GM12878 (cell line): ENCODE measurements at regions of chr11 and their contacts with region 1.

Region 1: GRCh38 chr11:112086422-112087191 is at the starts of genes SDHD and TIMM8B:
- DNase-seq: peak; percentile 93
- ATAC-seq: peak; percentile 95
- H3K4me3 ChIP-seq: peak within 1 kb of the TSS; percentile 98
- H3K27ac ChIP-seq: peak within 1 kb of the TSS; percentile 61
- H3K4me1 ChIP-seq: peaks cover 3% of the 10 kb centered on the region; the same call in 1 of the 2 replicates
- H3K27me3 ChIP-seq: no peaks in the 10 kb centered on the region
- CTCF ChIP-seq: peak; percentile 29 to 41 (median 36); a peak in 4 of 6 replicates
- EP300 ChIP-seq: no peak
- POLR2A ChIP-seq: peak; percentile 97
- RAD21 ChIP-seq: no peak
- polyA plus RNA-seq, gene SDHD: 469 to 775 TPM
- polyA plus RNA-seq, gene TIMM8B: 247 to 271 TPM

Region 2: DNA sequence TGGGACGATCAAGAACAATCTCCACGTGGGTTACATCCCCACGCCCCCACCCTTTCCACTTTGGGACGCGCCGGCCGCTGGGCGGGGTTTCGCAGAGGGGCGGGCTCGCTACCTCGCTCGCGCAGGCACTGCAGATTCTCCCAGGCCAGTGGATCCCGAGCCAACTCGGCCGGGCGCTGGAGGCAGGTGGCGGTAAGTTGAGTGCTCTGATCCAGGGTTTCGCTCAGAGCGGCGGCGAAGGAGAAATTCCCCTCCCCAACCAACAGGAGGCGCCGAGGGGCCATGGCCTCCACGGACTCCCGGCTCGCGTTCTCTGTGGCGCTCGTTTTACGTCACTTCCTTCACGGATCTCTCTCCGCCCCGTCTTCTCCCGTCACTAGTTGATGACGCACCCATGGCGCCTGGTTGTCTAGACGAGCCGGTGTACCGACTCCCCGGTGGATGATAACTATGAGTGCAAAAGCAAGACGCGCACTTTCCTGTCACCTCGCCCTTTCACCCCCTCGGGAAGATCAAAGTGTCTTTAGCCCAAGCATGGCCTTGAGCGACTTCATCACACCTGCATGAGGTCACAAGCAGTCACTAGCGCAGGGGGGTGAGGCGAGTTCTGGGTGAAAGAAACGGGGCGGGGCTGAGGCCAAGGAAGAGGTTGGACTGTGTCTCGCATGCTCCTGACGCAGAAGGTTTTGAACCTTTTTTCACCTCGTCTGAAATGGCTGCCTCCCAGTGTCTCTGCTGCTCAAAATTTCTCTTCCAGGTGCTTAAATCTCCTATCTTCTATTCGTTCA is 207.6 kb before region 1 on chr11 and contains the starts of genes CFAP68 and FDXACB1:
- CTCF ChIA-PET with region 1: no interaction called
- POLR2A ChIA-PET with region 1: no interaction called
- RAD21 ChIA-PET with region 1: no interaction called
- SMC1A ChIA-PET with region 1: no interaction called
- in situ Hi-C with region 1: loop called (anchors 5 kb)
- intact Hi-C with region 1: loop called (anchors 5 kb)
- DNase-seq: peak; percentile 93
- ATAC-seq: peak; percentile 94
- H3K4me3 ChIP-seq: peak within 1 kb of the TSS; percentile 94
- H3K27ac ChIP-seq: peak within 1 kb of the TSS; percentile 85
- H3K4me1 ChIP-seq: no peaks in the 10 kb centered on the region
- H3K27me3 ChIP-seq: no peaks in the 10 kb centered on the region
- CTCF ChIP-seq: peak; percentile 96 to 97 (median 97); a peak in 5 of 6 replicates
- EP300 ChIP-seq: peak in 1 of 2 experiments; percentile 63; a peak in 2 of 4 replicates
- POLR2A ChIP-seq: peak; percentile 85
- RAD21 ChIP-seq: peak; percentile 59
- polyA plus RNA-seq, gene CFAP68: 72.7 to 83.7 TPM
- polyA plus RNA-seq, gene FDXACB1: 8.6 to 13.3 TPM

Region 3: DNA sequence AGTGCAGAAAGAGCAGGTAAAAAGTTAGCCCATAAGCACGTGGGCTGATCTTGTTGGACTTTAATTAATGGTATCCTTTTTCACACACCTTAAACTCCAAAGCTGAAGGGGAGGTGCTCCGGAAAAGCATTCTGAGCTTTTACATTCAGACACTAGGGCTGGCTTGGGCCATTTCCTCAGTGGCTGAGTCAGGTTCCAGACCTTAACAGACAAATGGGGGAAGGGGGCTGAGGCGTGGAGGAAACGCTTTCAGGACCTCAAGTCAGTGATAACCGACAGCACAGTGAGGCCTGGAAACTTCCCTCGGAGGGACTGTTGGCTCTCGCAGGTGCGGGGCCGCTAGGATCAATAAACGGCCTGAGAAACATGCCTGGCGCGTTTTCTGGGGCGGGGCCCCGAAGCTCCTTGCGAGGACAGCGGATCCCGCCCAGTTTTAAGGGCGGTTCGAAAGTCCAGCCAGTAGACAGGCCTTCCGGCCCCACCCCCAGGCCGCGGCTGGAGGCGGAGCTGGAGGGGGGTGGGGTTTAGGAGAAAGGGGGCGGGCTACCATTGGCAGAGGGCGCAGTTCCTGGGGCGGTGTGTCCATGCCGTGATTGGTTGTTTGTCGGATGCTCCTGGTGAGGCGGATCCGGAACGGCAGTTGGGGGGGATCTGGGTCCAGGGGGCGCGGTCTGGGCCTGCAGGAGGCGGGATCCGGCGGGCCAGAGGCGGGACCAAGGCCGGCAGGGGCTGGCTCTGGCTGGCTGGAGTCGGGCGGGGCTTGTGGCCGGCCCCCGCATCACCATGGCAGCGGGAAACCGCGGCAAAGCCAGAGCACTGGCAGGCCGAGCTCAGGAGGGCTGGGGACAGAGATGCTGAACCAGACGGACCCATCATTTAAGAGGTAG is 159.9 kb before region 1 on chr11:
- CTCF ChIA-PET with region 1: interaction called, 5 read pairs
- POLR2A ChIA-PET with region 1: interaction called, 5 read pairs
- RAD21 ChIA-PET with region 1: interaction called, 3 read pairs
- SMC1A ChIA-PET with region 1: interaction called, 3 read pairs
- in situ Hi-C with region 1: no loop called
- intact Hi-C with region 1: loop called (anchors 2 kb)
- DNase-seq: peak; percentile 84
- ATAC-seq: peak; percentile 98
- H3K4me3 ChIP-seq: peak overlapping the region; percentile 66
- H3K27ac ChIP-seq: peak overlapping the region; percentile 66
- H3K4me1 ChIP-seq: peaks cover 10% of the 10 kb centered on the region
- H3K27me3 ChIP-seq: no peaks in the 10 kb centered on the region; a peak in 1 of 4 replicates
- CTCF ChIP-seq: no peak
- EP300 ChIP-seq: no peak
- POLR2A ChIP-seq: peak; percentile 79
- RAD21 ChIP-seq: no peak

Region 4: GRCh38 chr11:112024773-112025678 is 61.6 kb before region 1 on chr11 and contains the start of gene DLAT:
- CTCF ChIA-PET with region 1: no interaction called
- POLR2A ChIA-PET with region 1: interaction called, 4 read pairs
- RAD21 ChIA-PET with region 1: interaction called, 3 read pairs
- SMC1A ChIA-PET with region 1: no interaction called
- in situ Hi-C with region 1: no loop called
- intact Hi-C with region 1: loop called (anchors 1 kb)
- DNase-seq: peak; percentile 78
- ATAC-seq: peak; percentile 90
- H3K4me3 ChIP-seq: peak within 1 kb of the TSS; percentile 74
- H3K27ac ChIP-seq: peak within 1 kb of the TSS; percentile 89
- H3K4me1 ChIP-seq: peaks cover 9% of the 10 kb centered on the region
- H3K27me3 ChIP-seq: no peaks in the 10 kb centered on the region
- CTCF ChIP-seq: no peak
- EP300 ChIP-seq: peak; percentile 44 to 49; a peak in 1 of 4 replicates
- POLR2A ChIP-seq: peak; percentile 91
- RAD21 ChIP-seq: no peak
- polyA plus RNA-seq, gene DLAT: 16.5 to 21.4 TPM

Region 5: DNA sequence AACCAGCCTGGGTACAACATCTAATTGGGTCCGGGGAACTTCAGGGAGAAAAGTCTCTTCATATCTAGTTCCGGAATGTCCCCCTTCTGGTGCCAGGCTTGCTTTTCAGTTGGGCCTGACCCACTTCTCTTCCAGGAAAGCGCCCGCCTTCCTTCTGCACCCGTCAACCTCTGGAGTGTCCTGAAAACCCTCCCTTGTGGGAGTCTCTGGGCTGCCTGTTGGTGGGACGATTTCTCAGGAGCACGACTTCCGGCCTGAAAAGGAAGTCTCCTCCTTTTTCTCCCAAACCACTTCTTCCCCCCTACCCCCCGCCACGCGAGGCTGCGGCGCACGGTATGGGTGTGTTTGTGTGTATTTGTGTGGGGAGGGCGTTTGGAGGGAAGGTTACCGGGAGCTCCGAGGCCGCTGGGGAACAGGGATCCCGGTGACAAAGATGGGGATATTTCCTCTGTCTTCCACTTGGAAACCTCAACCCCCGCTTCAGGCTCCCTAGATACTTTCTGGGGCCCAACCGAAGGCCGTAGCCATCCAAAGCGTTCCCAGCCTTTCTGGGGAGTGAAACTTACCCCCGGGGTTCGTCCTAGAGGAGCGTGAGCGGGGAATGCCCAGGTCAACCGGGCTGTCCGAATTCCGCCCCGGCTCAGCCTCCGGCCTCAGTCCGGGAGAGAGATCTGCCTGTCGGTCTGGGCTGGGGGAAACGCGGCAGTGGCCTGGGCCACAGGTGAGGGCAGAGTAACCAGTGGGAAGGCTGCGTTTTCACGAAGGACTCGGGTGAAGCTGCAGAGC is 12.4 kb before region 1 on chr11 and contains the start of gene NKAPD1:
- CTCF ChIA-PET with region 1: interaction called, 3 read pairs
- POLR2A ChIA-PET with region 1: interaction called, 9 read pairs
- RAD21 ChIA-PET with region 1: interaction called, 4 read pairs
- SMC1A ChIA-PET with region 1: interaction called, 4 read pairs
- in situ Hi-C with region 1: no loop called
- intact Hi-C with region 1: loop called (anchors 1 kb)
- DNase-seq: peak; percentile 88
- ATAC-seq: peak; percentile 92
- H3K4me3 ChIP-seq: peak within 1 kb of the TSS; percentile 85
- H3K27ac ChIP-seq: peak within 1 kb of the TSS; percentile 97
- H3K4me1 ChIP-seq: 0 out of 2 replicates have a peak, but pooled peaks cover 3% of the 10 kb centered on the region
- H3K27me3 ChIP-seq: no peaks in the 10 kb centered on the region
- CTCF ChIP-seq: no peak
- EP300 ChIP-seq: no peak
- POLR2A ChIP-seq: peak; percentile 78
- RAD21 ChIP-seq: peak; percentile 4; the same call in 1 of the 2 replicates
- polyA plus RNA-seq, gene NKAPD1: 9.6 to 11.5 TPM

Region 6: GRCh38 chr11:112113539-112114457 is 27.2 kb after region 1 on chr11:
- CTCF ChIA-PET with region 1: interaction called, 12 read pairs
- POLR2A ChIA-PET with region 1: no interaction called
- RAD21 ChIA-PET with region 1: interaction called, 6 read pairs
- SMC1A ChIA-PET with region 1: interaction called, 4 read pairs
- in situ Hi-C with region 1: no loop called
- intact Hi-C with region 1: no loop called
- DNase-seq: no peak
- ATAC-seq: peak; percentile 74
- H3K4me3 ChIP-seq: no peak overlapping the region
- H3K27ac ChIP-seq: no peak overlapping the region
- H3K4me1 ChIP-seq: no peaks in the 10 kb centered on the region; the same call in 1 of the 2 replicates
- H3K27me3 ChIP-seq: no peaks in the 10 kb centered on the region
- CTCF ChIP-seq: peak; percentile 53 to 70 (median 59)
- EP300 ChIP-seq: no peak
- POLR2A ChIP-seq: no peak
- RAD21 ChIP-seq: peak; percentile 69